Breast epithelium (tissue), 4 donors: ENCODE measurements at regions of chr6 and their contacts with region 1.

Region 1: GRCh38 chr6:16533721-16534136 is 227.5 kb downstream of the ATXN1 start:
- DNase-seq: no peak
- H3K4me3 ChIP-seq: no peak overlapping the region
- H3K27ac ChIP-seq: no peak overlapping the region
- H3K4me1 ChIP-seq: no peaks in the 10 kb centered on the region
- H3K27me3 ChIP-seq: no peaks in the 10 kb centered on the region
- CTCF ChIP-seq: no peak
- POLR2A ChIP-seq: no peak

Region 2: DNA sequence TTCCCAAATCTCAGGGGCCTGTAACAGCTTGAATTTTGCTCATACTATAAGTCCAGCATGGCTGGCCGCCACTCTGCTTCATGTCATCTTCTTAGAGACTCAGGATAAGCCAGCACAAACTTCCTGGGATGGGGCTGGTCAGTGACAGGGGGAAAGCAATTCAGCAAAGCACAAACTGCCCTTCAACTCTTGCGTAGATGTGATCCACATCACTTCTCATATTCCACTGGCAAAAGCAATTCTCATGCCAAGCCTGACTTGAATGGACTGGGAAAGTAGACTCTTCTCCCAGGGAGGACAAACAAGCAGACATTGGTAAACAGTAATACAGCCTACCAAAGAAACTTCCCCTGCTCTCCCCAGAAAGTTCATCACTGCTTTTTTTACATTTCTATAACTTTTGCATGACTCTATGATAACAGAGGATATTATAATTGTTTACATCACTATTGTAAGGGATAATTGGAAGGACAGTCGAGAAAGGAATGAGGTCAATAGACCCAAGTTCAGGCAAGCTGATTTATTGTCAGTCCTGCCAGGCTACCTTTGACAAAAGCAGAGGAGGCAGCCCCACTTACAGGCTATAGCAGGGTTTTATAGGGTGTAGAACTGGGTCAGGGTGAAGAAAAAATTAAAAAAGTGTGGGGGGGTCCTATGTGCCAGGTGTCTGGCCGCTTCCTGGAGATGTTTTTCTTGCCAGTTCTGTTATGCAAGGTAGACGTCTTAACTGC is 784.9 kb after region 1 on chr6:
- intact Hi-C with region 1: loop called (anchors 5 kb)
- DNase-seq: no peak
- H3K4me3 ChIP-seq: no peak overlapping the region
- H3K27ac ChIP-seq: no peak overlapping the region
- H3K4me1 ChIP-seq: no peaks in the 10 kb centered on the region
- H3K27me3 ChIP-seq: no peaks in the 10 kb centered on the region
- CTCF ChIP-seq: no peak
- POLR2A ChIP-seq: no peak